ENCODE measurements at regions of chr3 and their contacts with region 1.

Region 1: DNA sequence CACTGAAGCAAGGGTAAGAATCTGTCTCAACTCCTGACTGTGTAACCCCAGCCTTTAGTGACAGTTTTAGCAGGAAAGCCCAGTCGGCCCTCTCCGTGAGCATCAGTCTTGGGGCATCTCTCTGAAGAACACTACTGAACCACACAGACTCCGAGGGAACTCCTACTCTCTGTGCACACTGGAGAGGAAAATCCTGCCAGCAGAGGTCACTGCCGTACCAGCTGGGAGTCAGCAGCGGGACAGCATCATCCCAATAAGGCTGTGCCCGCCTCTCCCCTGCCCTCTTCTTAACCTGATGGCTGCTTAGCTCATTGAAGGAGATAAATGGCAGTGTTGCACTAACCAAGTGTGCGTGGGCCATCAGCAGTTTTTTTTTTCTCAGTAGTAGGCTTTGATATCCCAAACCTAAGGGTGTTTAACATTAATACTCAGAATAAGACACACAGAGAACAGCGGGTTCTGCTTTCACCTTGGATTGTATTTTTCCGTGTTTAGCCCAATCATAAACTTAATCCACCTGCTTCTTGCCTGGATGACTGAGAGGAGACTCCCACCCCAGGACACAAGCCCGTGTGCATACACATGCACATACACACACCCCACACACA is 26.6 kb upstream of the RASA2 start:
- DNase-seq: peak; percentile 74 to 89 (median 76)
- H3K4me3 ChIP-seq: no peak overlapping the region
- H3K4me3 Mint-ChIP-seq: no peak overlapping the region
- H3K27ac ChIP-seq: no peak overlapping the region
- H3K27ac Mint-ChIP-seq: peak overlapping the region in 1 of 8 donors; percentile 17
- H3K4me1 ChIP-seq: peaks cover under 1% of the 10 kb centered on the region
- H3K4me1 Mint-ChIP-seq: peaks cover 2 to 13% (median 8%) of the 10 kb centered on the region in 3 donors
- H3K27me3 ChIP-seq: no peaks in the 10 kb centered on the region
- H3K27me3 Mint-ChIP-seq: no peaks in the 10 kb centered on the region

Region 2: GRCh38 chr3:141303481-141304223 is 156.5 kb before region 1 on chr3:
- CTCF ChIA-PET with region 1: interaction called, 84 read pairs
- POLR2A ChIA-PET with region 1: no interaction called
- DNase-seq: peak; percentile 38 to 70 (median 66)
- H3K4me3 ChIP-seq: no peak overlapping the region
- H3K4me3 Mint-ChIP-seq: peak overlapping the region in 1 of 7 donors; percentile 10
- H3K27ac ChIP-seq: no peak overlapping the region
- H3K27ac Mint-ChIP-seq: no peak overlapping the region
- H3K4me1 ChIP-seq: peaks cover 41% of the 10 kb centered on the region
- H3K4me1 Mint-ChIP-seq: peaks cover 24 to 36% (median 34%) of the 10 kb centered on the region in 3 donors
- H3K27me3 ChIP-seq: no peaks in the 10 kb centered on the region
- H3K27me3 Mint-ChIP-seq: no peaks in the 10 kb centered on the region

Region 3: DNA sequence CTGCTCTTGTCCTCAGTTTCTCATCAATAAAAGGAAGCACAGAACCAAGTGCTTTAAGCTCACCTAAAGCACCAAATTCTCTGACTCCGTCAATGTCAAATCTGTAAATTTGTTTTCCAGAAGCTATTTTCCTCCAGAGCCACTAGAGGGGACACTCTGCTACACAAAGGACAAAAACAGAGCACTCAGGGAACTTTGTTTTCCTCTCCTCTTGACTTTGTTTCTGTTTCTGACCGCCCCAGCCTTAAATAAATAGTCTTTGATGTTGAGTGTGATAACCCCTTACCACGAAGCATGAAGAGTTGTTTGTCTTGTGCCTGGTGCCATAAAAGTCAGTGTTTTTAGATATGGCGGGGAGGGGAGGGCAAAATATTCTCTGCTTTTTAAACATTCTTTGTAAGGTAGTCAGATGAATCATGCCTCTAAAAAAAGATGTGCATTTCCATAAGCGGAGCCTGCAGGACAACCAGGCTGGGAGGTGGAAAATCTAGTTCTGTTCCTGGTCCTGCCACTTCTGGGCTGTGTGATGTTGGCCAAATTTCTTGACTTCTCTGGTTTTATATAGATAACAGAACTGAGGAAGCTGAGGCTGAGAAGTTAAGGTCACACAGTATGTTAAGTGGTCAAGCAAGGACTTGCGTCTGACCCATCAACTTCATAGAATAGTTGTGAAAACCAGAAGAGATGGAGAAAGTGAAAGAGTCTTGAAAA is 99.2 kb before region 1 on chr3:
- CTCF ChIA-PET with region 1: interaction called, 69 read pairs
- POLR2A ChIA-PET with region 1: no interaction called
- DNase-seq: peak in 2 of 5 donors; percentile 24 to 39
- H3K4me3 ChIP-seq: no peak overlapping the region
- H3K4me3 Mint-ChIP-seq: peak overlapping the region in 5 of 7 donors; percentile 30 to 73 (median 49)
- H3K27ac ChIP-seq: no peak overlapping the region
- H3K27ac Mint-ChIP-seq: peak overlapping the region in 1 of 8 donors; percentile 61
- H3K4me1 ChIP-seq: no peaks in the 10 kb centered on the region
- H3K4me1 Mint-ChIP-seq: peaks cover 1 to 10% (median 8%) of the 10 kb centered on the region in 3 donors
- H3K27me3 ChIP-seq: no peaks in the 10 kb centered on the region
- H3K27me3 Mint-ChIP-seq: peaks cover 0 to 3% of the 10 kb centered on the region in 2 donors

Region 4: DNA sequence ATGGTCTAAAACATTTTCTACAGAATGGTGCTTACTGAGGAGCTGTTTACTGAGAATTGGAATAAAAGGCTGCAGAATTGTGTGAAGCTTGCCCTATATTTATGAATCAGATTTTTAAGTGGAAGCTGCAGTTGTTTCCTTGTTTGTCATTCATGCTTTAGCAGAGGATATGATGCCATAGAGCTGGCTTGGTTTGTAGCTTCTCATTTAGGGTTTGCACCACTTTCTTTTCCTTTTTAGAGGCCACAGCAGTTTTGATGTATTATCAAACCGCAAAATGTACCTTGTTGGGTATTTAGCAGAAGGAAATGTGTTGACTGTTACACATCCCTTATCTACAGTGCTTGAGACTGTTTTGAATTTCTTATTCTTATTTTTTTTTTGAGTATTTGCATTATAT is 92.9 kb after region 1 on chr3:
- CTCF ChIA-PET with region 1: interaction called, 79 read pairs
- POLR2A ChIA-PET with region 1: no interaction called
- DNase-seq: peak in 2 of 5 donors; percentile 74 to 77
- H3K4me3 ChIP-seq: no peak overlapping the region
- H3K4me3 Mint-ChIP-seq: peak overlapping the region in 6 of 7 donors; percentile 15 to 74 (median 56)
- H3K27ac ChIP-seq: no peak overlapping the region
- H3K27ac Mint-ChIP-seq: peak overlapping the region in 7 of 8 donors; percentile 51 to 95 (median 86)
- H3K4me1 ChIP-seq: peaks cover 71% of the 10 kb centered on the region
- H3K4me1 Mint-ChIP-seq: peaks cover 50 to 77% (median 67%) of the 10 kb centered on the region in 3 donors
- H3K27me3 ChIP-seq: no peaks in the 10 kb centered on the region
- H3K27me3 Mint-ChIP-seq: no peaks in the 10 kb centered on the region

Region 5: DNA sequence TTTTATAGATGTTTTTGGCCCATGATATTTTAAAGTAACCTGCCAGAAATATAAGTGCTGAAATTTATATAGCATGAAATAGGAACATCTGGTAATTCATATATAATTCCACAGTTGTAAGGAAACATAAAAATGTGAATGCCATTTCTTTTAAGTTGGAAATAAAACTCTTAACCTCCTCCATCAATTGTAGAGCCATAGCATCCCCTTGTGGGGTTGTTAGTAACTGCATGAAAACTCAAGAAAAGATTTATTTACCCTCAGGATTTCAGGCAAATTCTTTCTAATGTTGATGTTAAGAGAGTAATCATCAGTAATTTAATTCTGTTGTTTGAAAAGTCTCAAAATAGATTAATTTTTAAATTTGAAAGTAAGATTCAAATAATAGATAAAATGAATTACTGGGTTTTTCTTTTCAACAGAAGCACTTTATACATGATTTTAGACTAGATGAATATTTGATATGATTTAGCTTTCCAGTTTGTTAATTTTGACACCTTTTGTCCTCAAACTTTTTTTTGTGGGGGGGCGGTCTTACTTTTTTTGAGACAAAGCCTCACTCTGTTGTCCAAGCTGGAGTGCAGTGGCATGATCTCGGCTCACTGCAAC is 101.3 kb after region 1 on chr3:
- CTCF ChIA-PET with region 1: interaction called, 79 read pairs
- POLR2A ChIA-PET with region 1: no interaction called
- DNase-seq: peak in 4 of 5 donors; percentile 25 to 70 (median 58)
- H3K4me3 ChIP-seq: no peak overlapping the region
- H3K4me3 Mint-ChIP-seq: no peak overlapping the region
- H3K27ac ChIP-seq: no peak overlapping the region
- H3K27ac Mint-ChIP-seq: peak overlapping the region; percentile 35 to 88 (median 79)
- H3K4me1 ChIP-seq: peaks cover 37% of the 10 kb centered on the region
- H3K4me1 Mint-ChIP-seq: peaks cover 21 to 36% (median 28%) of the 10 kb centered on the region in 3 donors
- H3K27me3 ChIP-seq: no peaks in the 10 kb centered on the region
- H3K27me3 Mint-ChIP-seq: no peaks in the 10 kb centered on the region

Region 6: DNA sequence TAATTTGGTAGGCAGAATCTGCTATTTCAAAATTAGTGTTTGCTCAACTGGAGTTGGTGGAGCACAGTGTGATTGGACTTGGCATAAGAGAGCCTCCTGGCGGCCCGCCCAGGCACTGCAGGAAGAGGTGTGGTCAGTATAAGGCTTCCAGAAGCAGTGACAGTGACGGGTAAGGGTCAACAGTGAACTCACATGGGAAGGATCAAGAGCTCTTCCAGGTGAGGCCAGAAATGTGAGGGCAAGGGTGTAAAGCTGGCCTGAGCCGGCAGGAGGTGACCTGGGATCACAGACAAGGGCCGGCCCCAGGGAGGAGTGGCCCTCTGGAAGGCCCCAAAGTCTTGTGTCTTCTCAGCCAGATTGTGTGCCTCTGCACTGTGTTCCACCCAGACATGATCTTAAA is 184.7 kb after region 1 on chr3:
- CTCF ChIA-PET with region 1: interaction called, 15 read pairs
- POLR2A ChIA-PET with region 1: no interaction called
- DNase-seq: peak; percentile 32 to 75 (median 56)
- H3K4me3 ChIP-seq: no peak overlapping the region
- H3K4me3 Mint-ChIP-seq: no peak overlapping the region
- H3K27ac ChIP-seq: no peak overlapping the region
- H3K27ac Mint-ChIP-seq: peak overlapping the region in 1 of 8 donors; percentile 42
- H3K4me1 ChIP-seq: no peaks in the 10 kb centered on the region
- H3K4me1 Mint-ChIP-seq: peaks cover 0 to 4% (median 3%) of the 10 kb centered on the region in 3 donors
- H3K27me3 ChIP-seq: no peaks in the 10 kb centered on the region
- H3K27me3 Mint-ChIP-seq: no peaks in the 10 kb centered on the region

Measured in CD8-positive, alpha-beta memory T cell (primary cell).